B cell (primary cell): ENCODE measurements at regions of chr6 and their contacts with region 1.

Region 1: GRCh38 chr6:35522660-35523658 is 10.3 kb upstream of the TULP1 start:
- DNase-seq: peak; percentile 80
- ATAC-seq: peak; percentile 92
- H3K4me3 ChIP-seq: peak overlapping the region; percentile 14 to 50 (median 41)
- H3K4me3 Mint-ChIP-seq: peak overlapping the region; percentile 77
- H3K27ac ChIP-seq: no peak overlapping the region
- H3K27ac Mint-ChIP-seq: no peak overlapping the region
- H3K4me1 ChIP-seq: peaks cover 3 to 9% of the 10 kb centered on the region in 2 donors
- H3K4me1 Mint-ChIP-seq: peaks cover 9% of the 10 kb centered on the region
- H3K27me3 ChIP-seq: peaks cover 0 to 5% (median 0%) of the 10 kb centered on the region in 4 experiments
- H3K27me3 Mint-ChIP-seq: no peaks in the 10 kb centered on the region
- CTCF ChIP-seq: peak; percentile 98

Region 2: DNA sequence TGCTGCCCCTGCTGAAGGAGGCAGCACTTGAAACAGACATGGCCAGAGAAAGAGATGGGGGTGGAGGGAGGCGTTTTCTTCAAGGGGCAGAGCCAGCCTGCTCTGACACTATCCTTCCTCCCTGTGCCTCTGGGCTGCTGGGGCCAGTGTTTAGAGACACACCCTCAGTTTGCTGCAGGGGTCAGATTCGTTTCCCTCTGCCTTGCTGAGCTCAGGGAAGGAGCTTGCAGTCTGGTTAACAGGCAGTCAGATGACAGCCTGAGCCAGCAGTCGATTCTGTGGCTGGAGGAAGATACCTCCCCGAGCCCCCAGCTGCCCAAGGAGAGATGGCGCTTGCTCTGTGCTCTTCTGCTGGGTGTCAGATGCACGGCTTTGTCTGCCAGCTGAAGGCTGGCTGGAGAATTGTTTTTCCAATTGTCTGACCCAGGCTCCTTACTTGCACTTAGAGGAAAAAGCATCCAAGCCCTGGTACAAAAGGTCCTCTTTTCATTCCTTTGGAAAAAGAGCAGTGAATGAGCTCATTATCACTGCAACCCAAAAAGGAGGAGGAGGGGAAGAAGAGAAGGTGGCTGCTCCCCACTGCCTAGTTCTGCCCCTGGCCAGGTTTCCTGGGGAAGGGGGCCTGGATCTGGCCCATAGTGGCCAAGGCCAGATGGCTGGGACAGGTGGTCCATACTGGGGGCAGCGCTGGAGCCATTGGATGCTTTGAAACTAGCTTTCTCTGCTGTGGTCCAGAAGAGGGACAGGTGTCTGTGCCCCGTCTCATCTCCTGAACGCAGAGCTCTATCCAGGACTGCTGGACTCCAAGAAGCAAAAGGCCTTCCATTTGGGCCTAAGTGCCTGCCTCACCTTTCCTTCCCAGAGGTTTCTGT is 470.0 kb before region 1 on chr6:
- CTCF ChIA-PET with region 1: no interaction called
- POLR2A ChIA-PET with region 1: no interaction called
- intact Hi-C with region 1: no loop called
- DNase-seq: no peak
- ATAC-seq: no peak
- H3K4me3 ChIP-seq: no peak overlapping the region
- H3K4me3 Mint-ChIP-seq: no peak overlapping the region
- H3K27ac ChIP-seq: no peak overlapping the region
- H3K27ac Mint-ChIP-seq: no peak overlapping the region
- H3K4me1 ChIP-seq: peaks cover 6 to 11% of the 10 kb centered on the region in 2 donors
- H3K4me1 Mint-ChIP-seq: no peaks in the 10 kb centered on the region
- H3K27me3 ChIP-seq: no peaks in the 10 kb centered on the region
- H3K27me3 Mint-ChIP-seq: no peaks in the 10 kb centered on the region
- CTCF ChIP-seq: no peak

Region 3: GRCh38 chr6:35534407-35535170 is 11.6 kb after region 1 on chr6:
- CTCF ChIA-PET with region 1: interaction called, 10 read pairs
- POLR2A ChIA-PET with region 1: no interaction called
- intact Hi-C with region 1: no loop called
- DNase-seq: no peak
- ATAC-seq: no peak
- H3K4me3 ChIP-seq: no peak overlapping the region
- H3K4me3 Mint-ChIP-seq: no peak overlapping the region
- H3K27ac ChIP-seq: no peak overlapping the region
- H3K27ac Mint-ChIP-seq: no peak overlapping the region
- H3K4me1 ChIP-seq: no peaks in the 10 kb centered on the region
- H3K4me1 Mint-ChIP-seq: no peaks in the 10 kb centered on the region
- H3K27me3 ChIP-seq: peaks cover 0 to 5% (median under 1%) of the 10 kb centered on the region in 4 experiments
- H3K27me3 Mint-ChIP-seq: peaks cover 19% of the 10 kb centered on the region
- CTCF ChIP-seq: no peak